AG04449 (cell line): ENCODE measurements at regions of chr7 and their contacts with region 1.

Region 1: DNA sequence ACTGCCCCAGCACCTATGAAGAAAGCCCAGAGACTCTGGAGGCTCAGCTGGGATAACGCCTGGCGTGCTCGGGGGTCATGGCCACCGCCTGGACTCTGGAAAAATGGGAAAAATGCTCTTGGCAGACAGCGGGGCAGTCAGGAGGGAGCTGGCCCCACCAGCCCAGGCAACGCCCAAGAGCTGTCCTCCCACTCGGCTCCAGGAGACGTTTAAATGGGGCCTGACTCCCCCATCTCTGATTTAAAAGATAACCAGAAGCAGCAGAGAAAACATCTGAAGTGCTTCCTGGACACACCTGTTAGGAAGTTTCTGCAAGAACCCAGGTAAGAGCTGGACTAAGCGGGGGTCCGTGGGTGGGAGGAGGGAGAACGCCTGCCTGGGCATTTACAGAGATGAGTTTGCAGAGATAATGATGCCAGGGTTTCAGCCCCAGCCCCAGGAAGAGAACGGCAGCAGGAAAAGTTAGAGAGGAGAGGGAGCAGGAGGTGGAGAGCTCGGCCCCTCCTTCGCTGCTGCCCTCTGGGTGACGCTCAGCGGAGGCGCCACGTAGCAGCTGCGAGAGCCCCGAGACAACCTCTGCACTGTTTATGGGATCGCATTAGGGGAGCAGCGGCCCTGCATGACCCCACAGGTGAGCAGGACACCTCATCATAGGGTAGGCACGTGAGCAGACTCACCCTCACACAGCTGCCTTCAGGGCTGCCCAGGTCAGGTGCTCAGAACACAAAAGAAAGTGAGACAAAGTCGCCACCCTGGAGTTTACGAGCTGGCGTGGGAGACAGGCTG is 83.5 kb upstream of the INSIG1 start:
- DNase-seq: no peak
- H3K4me3 ChIP-seq: peak overlapping the region; percentile 50
- CTCF ChIP-seq: no peak

Region 2: DNA sequence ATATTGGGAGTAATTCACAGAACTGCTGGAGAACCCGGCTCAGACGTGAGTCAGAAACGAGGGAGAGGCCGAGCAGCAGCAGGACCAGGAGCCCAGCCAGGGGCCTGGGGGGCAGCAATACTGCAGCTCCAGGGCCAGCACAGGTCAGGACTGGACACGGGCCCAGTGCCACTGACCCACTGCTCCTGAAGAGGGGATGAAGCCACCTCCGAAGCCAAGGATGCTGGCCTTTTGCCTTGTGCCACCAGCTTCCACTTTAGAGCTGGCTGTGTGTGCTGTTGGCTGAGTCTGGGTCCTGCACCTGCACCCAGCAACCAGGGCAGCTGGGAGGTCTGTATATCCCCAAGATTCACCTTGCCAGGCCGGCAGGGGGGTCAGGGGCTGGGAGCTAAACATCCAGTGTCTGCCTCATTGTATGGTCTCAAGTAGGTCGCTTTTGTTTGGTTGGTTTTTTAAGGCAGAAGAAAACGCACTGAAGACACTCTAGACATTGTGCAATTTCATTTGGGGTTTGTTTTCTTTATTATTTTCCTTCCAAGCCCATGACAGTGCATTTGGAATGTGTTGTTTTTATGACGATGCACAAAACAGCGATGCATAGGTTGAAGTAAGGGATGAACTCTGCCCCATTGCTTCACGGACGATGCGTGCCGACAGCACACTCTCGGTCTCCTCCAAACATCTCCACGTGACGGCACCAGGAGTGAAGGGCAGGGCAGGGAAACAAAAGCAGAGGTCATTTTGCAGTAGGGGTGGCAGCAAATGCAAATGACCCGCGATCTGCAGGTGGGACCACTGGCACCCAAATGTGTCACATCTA is 55.8 kb after region 1 on chr7:
- CTCF ChIA-PET with region 1: no interaction called
- POLR2A ChIA-PET with region 1: no interaction called
- DNase-seq: no peak
- H3K4me3 ChIP-seq: no peak overlapping the region
- CTCF ChIP-seq: no peak

Region 3: GRCh38 chr7:155298834-155299534 is 84.8 kb after region 1 on chr7:
- CTCF ChIA-PET with region 1: no interaction called
- POLR2A ChIA-PET with region 1: interaction called, 11 read pairs
- DNase-seq: peak; percentile 72
- H3K4me3 ChIP-seq: peak overlapping the region; percentile 73
- CTCF ChIP-seq: no peak